Psoas muscle (tissue), 8 donors: ENCODE measurements at regions of chr2 and their contacts with region 1.

Region 1: DNA sequence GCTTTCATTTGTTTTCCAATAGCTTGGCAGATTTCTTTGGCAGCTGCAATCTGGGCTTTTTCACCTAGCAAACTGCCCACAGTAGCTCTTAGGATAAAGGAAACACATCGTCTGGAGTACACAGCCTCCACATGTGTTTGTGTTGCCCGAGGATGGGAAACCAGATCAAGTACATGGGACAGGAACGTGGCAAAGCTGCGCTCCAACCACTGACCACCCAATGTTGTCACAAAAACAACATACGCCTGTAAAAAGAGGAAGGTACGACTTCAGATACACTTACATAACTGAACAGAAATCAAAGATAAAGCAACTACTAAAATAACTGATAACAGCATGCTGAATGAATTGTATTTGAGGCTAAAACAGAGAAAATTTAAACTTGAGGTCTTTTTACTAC is 15.5 kb downstream of the HEATR5B start:
- DNase-seq: no peak
- ATAC-seq: no peak
- H3K4me3 ChIP-seq: no peak overlapping the region
- H3K27ac ChIP-seq: no peak overlapping the region
- H3K4me1 ChIP-seq: no peaks in the 10 kb centered on the region
- H3K27me3 ChIP-seq: no peaks in the 10 kb centered on the region
- CTCF ChIP-seq: no peak

Region 2: DNA sequence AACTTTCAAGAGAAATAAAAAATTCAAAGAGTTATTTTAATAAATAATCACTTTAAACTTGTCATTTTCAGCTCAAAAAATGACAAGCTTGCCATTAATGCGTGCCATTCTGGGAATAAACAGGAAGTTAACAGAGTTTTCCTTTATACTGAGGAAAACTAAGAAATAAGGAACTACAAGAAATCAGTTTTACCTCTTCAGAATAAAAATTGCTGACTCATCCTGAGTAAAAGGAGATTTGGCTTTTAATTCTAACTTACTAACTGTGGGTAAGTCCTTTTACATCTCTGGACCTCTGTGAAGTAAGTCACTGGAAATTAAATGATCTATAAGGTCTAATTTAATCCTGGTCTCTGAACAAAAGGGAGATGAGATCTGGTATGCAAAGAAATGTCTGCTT is 146.6 kb after region 1 on chr2:
- intact Hi-C with region 1: loop called in 1 of 2 experiments (anchors 5 kb)
- DNase-seq: no peak
- ATAC-seq: no peak
- H3K4me3 ChIP-seq: no peak overlapping the region
- H3K27ac ChIP-seq: peak overlapping the region; percentile 28
- H3K4me1 ChIP-seq: peaks cover 6% of the 10 kb centered on the region
- H3K27me3 ChIP-seq: no peaks in the 10 kb centered on the region
- CTCF ChIP-seq: no peak

Region 3: GRCh38 chr2:37417321-37417720 is 348.6 kb after region 1 on chr2:
- intact Hi-C with region 1: no loop called
- DNase-seq: no peak
- ATAC-seq: no peak
- H3K4me3 ChIP-seq: no peak overlapping the region
- H3K27ac ChIP-seq: no peak overlapping the region
- H3K4me1 ChIP-seq: peaks cover 9% of the 10 kb centered on the region
- H3K27me3 ChIP-seq: no peaks in the 10 kb centered on the region
- CTCF ChIP-seq: no peak